ENCODE measurements at regions of chr5 and their contacts with region 1.

Region 1: GRCh38 chr5:147558826-147559225 is 49.0 kb upstream of the DPYSL3 start:
- DNase-seq: peak; percentile 86
- H3K4me3 ChIP-seq: no peak overlapping the region
- H3K27ac ChIP-seq: no peak overlapping the region
- H3K4me1 ChIP-seq: peaks cover 3% of the 10 kb centered on the region
- H3K27me3 ChIP-seq: peaks cover 0 to 1% of the 10 kb centered on the region in 2 experiments
- CTCF ChIP-seq: peak; percentile 74 to 85
- POLR2A ChIP-seq: no peak

Region 2: GRCh38 chr5:146624179-146624578 is 934.6 kb before region 1 on chr5:
- CTCF ChIA-PET with region 1: no interaction called
- POLR2A ChIA-PET with region 1: no interaction called
- dilution Hi-C with region 1: no loop called
- intact Hi-C with region 1: no loop called
- DNase-seq: no peak
- H3K4me3 ChIP-seq: no peak overlapping the region
- H3K27ac ChIP-seq: no peak overlapping the region
- H3K4me1 ChIP-seq: no peaks in the 10 kb centered on the region
- H3K27me3 ChIP-seq: no peaks in the 10 kb centered on the region
- CTCF ChIP-seq: no peak
- POLR2A ChIP-seq: no peak

Region 3: DNA sequence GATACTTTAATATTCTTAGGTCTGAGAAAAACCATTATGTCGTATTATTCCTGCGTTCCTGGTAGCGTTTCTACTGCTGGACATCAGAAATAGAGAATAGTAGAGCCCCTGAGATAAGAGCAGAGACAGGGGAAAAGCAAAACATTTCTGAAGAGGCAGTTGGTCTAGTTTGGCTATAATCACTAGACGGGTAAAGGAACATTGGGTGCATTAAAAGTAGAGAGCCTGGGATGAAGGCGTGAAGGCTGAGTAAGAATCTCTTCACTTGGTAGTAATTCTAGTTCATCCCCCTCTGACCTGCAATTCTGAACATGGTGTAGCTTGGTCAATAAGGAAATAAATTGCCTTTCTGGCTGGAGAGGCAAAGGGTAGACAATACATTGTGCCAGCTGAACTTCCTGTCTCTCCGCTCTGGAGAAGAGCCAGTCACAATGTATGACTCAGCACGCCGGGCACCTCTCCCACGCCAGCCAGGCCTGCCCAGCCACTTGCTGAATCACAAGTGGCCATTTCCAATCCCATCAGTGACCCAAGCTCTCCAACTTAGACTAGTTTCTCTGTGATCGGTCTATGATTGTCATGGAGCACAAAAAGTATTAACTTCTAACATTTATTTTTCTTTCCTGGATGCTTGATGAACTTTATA is 248.6 kb before region 1 on chr5:
- CTCF ChIA-PET with region 1: no interaction called
- POLR2A ChIA-PET with region 1: no interaction called
- dilution Hi-C with region 1: no loop called
- intact Hi-C with region 1: loop called (anchors 5 kb)
- DNase-seq: peak; percentile 96
- H3K4me3 ChIP-seq: no peak overlapping the region
- H3K27ac ChIP-seq: peak overlapping the region; percentile 83
- H3K4me1 ChIP-seq: peaks cover 15% of the 10 kb centered on the region
- H3K27me3 ChIP-seq: no peaks in the 10 kb centered on the region
- CTCF ChIP-seq: no peak
- POLR2A ChIP-seq: no peak

Region 4: DNA sequence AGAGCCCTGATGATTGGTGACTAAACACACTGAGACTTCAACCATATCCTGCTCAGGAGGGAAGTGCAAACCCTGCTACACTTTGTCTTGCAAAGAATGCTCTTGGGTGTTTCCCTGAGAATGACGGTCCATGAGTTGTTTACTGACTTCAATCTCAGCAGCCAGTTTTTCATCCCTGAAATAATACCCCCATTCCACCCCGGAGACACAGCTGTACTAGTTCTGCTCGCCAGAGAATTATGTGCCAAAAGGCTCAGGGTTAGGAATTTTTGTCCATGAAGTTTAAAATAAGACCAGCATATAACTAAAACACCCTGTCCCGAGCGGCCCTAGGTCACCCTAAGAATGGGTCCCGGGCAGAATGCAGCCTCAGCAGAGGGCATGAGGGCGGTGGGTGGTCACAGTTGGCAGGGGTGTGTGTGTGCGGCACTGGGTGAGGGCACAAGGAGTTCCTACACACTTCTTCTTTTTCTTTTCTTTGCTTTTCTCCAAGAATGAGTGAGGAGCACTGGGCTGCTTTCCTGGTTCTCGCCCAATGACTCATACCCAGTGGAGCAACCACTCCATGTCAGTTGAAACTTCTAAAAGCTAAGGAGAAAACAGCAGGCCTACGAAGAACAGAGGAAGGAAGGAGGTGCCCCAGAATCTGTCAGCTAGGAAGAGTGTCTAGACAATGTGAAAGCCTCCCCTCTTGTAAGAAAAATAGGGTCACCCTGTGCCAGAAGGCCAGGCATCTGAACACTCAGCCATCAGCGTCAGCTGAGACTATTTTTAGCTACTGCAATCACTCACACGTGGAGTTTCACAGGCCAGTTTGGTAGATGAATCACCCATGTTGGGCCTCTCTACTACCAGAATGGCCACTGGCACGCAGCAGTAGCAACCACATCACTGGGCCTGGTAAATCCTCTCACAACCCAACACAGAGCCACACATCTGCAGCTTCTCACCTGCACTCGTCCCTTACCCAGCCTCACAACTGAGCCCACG is 154.9 kb before region 1 on chr5:
- CTCF ChIA-PET with region 1: interaction called, 8 read pairs
- POLR2A ChIA-PET with region 1: no interaction called
- dilution Hi-C with region 1: no loop called
- intact Hi-C with region 1: loop called (anchors 1 kb)
- DNase-seq: peak; percentile 96
- H3K4me3 ChIP-seq: no peak overlapping the region
- H3K27ac ChIP-seq: peak overlapping the region; percentile 95
- H3K4me1 ChIP-seq: peaks cover 25% of the 10 kb centered on the region
- H3K27me3 ChIP-seq: no peaks in the 10 kb centered on the region
- CTCF ChIP-seq: no peak
- POLR2A ChIP-seq: no peak

Region 5: GRCh38 chr5:147453875-147454814 is 104.7 kb before region 1 on chr5:
- CTCF ChIA-PET with region 1: interaction called, 136 read pairs
- POLR2A ChIA-PET with region 1: interaction called, 3 read pairs
- dilution Hi-C with region 1: no loop called
- intact Hi-C with region 1: loop called (anchors 1 kb)
- DNase-seq: peak; percentile 92
- H3K4me3 ChIP-seq: peak overlapping the region; percentile 43 to 88 (median 55)
- H3K27ac ChIP-seq: peak overlapping the region; percentile 37
- H3K4me1 ChIP-seq: peaks cover 4% of the 10 kb centered on the region
- H3K27me3 ChIP-seq: no peaks in the 10 kb centered on the region
- CTCF ChIP-seq: peak; percentile 90 to 95
- POLR2A ChIP-seq: no peak

Region 6: GRCh38 chr5:147483961-147484707 is 74.7 kb before region 1 on chr5:
- CTCF ChIA-PET with region 1: interaction called, 23 read pairs
- POLR2A ChIA-PET with region 1: no interaction called
- dilution Hi-C with region 1: no loop called
- intact Hi-C with region 1: loop called (anchors 1 kb)
- DNase-seq: peak; percentile 99
- H3K4me3 ChIP-seq: no peak overlapping the region
- H3K27ac ChIP-seq: peak overlapping the region; percentile 98
- H3K4me1 ChIP-seq: peaks cover 84% of the 10 kb centered on the region
- H3K27me3 ChIP-seq: no peaks in the 10 kb centered on the region
- CTCF ChIP-seq: no peak
- POLR2A ChIP-seq: no peak

Region 7: DNA sequence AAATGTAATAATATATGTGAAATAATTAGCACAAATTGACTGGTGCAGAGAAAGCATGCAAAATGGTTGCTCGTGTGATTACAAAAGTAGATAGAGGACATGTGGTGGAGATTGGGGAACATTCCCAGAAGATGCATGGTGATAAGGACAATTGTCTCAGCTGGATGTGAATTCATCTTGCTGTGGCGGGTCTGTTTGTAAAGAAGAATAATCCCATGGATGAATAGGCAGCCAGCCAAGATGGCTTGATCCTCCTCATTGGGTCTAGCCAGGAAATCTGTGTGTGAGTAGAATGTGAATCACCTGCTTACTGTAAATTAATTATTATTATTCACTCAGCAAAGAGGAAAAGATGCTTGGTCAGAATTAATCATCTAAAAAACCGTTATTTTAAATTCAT is 36.4 kb before region 1 on chr5:
- CTCF ChIA-PET with region 1: interaction called, 10 read pairs
- POLR2A ChIA-PET with region 1: no interaction called
- dilution Hi-C with region 1: no loop called
- intact Hi-C with region 1: no loop called
- DNase-seq: peak; percentile 87
- H3K4me3 ChIP-seq: no peak overlapping the region
- H3K27ac ChIP-seq: peak overlapping the region; percentile 11
- H3K4me1 ChIP-seq: peaks cover 19% of the 10 kb centered on the region
- H3K27me3 ChIP-seq: no peaks in the 10 kb centered on the region
- CTCF ChIP-seq: no peak
- POLR2A ChIP-seq: no peak

Region 8: GRCh38 chr5:147576646-147577535 is 18.1 kb after region 1 on chr5:
- CTCF ChIA-PET with region 1: interaction called, 43 read pairs
- POLR2A ChIA-PET with region 1: no interaction called
- dilution Hi-C with region 1: no loop called
- intact Hi-C with region 1: loop called (anchors 1 kb)
- DNase-seq: peak; percentile 45
- H3K4me3 ChIP-seq: no peak overlapping the region
- H3K27ac ChIP-seq: no peak overlapping the region
- H3K4me1 ChIP-seq: no peaks in the 10 kb centered on the region
- H3K27me3 ChIP-seq: no peaks in the 10 kb centered on the region
- CTCF ChIP-seq: peak; percentile 86 to 92
- POLR2A ChIP-seq: no peak

Region 9: DNA sequence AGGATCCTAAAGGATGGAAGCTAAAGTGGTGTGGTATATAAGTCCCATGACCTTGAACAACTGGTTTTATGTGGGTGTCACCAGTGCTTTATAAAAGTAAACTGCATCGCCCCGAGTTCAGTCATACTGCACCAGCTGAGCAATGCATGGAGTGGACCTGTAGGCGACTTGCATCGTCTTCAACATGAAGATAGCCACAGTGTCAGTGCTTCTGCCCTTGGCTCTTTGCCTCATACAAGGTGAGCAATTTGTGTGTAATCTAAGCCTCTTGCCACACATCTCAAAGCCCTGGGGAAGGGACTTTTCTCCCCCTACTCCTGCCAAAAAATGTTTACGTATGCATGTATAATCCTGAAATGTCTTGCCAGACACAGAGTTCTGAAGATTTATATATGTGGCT is 505.0 kb after region 1 on chr5 and contains the start of gene SPINK5:
- CTCF ChIA-PET with region 1: no interaction called
- POLR2A ChIA-PET with region 1: no interaction called
- dilution Hi-C with region 1: no loop called
- intact Hi-C with region 1: no loop called
- DNase-seq: no peak
- H3K4me3 ChIP-seq: no peak within 1 kb of the TSS
- H3K27ac ChIP-seq: no peak within 1 kb of the TSS
- H3K4me1 ChIP-seq: no peaks in the 10 kb centered on the region
- H3K27me3 ChIP-seq: no peaks in the 10 kb centered on the region
- CTCF ChIP-seq: no peak
- POLR2A ChIP-seq: no peak
- total RNA-seq, gene SPINK5: 0.55 and 0.91 TPM in 2 replicates

Measured in endothelial cell of umbilical vein (primary cell).